Right ventricle myocardium inferior (tissue), 1 donor: ENCODE measurements at regions of chr1 and their contacts with region 1.

Region 1: GRCh38 chr1:107963601-107964335 is 1.2 kb downstream of the VAV3 start:
- DNase-seq: peak; percentile 69
- ATAC-seq: peak; percentile 13

Region 2: DNA sequence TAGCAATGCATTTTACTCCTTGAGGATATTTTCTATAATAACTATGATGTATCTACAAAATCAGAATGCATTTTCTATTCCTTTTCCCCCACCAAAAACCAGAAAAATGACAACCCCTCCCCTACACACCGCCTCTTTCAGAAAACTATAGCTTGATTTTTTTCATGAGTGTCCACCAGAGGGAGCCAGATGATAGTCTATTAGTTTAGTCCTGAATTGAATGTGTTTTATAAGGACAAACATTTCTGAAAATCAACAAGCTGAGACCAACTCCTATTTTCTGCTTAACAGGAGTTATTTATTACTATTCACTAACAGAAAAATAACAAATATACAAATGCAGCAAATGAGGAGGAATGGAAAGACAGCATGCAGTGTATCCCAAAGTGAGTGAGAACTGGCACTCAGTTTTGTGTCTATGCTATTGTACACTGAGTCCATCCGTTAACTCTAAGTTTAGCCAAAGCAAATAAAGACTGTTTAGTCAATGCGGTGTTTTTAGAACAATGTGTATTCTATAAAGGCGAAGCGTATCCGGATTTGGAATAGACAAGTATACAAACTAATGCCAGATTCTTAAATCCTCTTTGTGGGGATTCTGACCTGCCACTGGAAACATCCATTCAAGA is 181.4 kb before region 1 on chr1:
- intact Hi-C with region 1: loop called (anchors 2 kb)
- DNase-seq: no peak
- ATAC-seq: peak; percentile 52

Region 3: GRCh38 chr1:107851418-107851817 is 112.3 kb before region 1 on chr1:
- intact Hi-C with region 1: loop called (anchors 10 kb)
- DNase-seq: no peak
- ATAC-seq: no peak

Region 4: DNA sequence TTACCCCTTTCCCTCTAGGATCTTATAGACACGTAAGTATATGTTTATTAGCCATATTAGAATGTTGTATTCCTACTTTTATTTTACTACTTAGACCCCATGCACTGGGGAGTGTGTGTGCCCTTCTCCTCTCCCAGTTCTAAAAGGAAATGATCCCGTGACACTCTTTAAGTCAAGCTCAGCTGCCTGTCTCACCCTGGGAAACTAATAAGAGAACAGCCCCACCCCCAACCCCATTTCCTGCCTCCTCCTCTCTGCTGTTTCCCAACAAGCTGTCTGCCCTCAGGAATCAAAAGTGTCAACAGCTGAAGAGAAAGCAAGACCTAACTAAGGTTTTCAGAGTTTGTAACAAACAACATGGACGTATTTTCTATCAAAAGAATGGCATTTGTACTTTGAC is 93.8 kb after region 1 on chr1:
- intact Hi-C with region 1: loop called (anchors 10 kb)
- DNase-seq: no peak
- ATAC-seq: peak; percentile 47

Region 5: DNA sequence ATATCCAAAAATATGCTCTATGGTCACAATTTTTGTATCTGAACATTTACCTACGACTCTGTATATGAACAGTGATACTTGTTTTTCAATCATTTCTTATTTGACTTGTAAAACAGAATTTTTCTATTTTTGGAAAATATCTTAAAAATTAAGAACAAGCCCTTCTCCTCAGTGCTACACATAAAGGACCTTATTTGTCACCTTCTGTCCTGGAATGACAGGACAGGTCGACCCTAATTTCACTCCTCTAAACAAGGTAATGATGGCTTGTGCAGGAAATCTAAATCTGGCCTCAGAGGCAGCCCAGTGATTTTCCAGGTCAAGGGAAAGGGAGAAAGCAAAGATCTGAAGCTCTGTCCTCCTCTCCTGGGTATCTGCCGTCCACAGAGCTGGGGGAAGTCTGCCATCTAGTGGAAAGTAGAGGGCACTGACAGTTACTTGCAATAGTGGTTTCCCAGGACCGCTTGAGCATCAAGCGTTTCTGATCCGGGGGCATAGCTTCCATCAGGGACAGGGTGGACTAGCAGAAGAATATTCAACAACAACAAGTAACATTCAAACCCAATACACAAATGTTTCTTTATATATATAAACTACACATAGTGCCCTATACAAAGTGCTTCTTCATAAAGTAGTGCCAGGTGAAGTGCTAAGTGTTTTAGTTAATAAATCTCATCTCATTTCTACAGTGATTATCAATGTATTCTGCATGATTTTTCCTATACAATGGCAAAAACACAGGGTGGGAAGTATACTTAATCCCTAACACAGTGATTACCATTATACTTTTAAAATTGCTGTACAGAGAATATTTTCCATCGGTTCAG is 161.8 kb after region 1 on chr1:
- intact Hi-C with region 1: loop called (anchors 5 kb)
- DNase-seq: no peak
- ATAC-seq: peak; percentile 91